AG04450 (cell line): ENCODE measurements at regions of chr21 and their contacts with region 1.

Region 1: GRCh38 chr21:41684381-41685245 is 82.2 kb downstream of the RIPK4 start:
- DNase-seq: peak; percentile 13
- H3K4me3 ChIP-seq: no peak overlapping the region
- H3K27ac ChIP-seq: no peak overlapping the region
- H3K27me3 ChIP-seq: peaks cover 16% of the 10 kb centered on the region
- CTCF ChIP-seq: no peak

Region 2: DNA sequence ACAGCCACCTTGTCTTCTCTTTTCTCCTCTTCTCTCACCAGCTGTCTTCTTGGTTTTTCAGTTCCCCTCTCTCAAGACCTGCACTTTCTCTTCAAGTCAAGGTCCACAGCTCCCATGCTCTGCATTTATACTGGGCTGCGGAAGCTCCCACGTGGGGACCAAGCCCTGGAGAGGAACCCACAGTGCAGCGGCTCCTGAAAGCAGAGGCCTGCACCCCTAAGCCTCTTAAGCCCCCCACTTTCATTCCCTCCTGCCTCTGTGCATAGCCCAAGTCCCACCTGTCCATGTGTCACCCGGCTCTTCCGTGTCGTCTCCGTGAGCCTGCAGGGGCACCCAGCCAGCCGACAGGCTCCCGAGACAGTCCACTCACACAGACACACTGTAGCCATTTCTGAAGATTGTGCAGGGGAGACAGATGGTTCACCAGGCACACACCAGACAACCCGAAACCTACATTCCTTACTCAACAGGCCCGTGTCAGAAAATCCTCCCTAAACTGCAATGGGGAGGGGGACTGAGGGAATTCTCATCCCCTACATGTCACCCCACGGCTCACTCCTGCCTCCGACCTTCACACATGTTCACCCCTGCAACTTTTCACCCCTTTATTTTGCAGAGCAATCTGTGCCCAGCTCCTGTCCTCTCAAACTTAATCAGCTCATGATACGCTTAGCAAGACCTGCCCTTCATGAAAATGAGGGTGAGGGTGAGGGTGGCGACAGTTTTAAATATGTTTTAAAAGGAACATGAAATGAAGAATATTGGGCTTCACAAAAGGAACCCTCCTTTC is 316.5 kb before region 1 on chr21:
- CTCF ChIA-PET with region 1: no interaction called
- POLR2A ChIA-PET with region 1: interaction called, 16 read pairs
- DNase-seq: no peak
- H3K4me3 ChIP-seq: no peak overlapping the region
- H3K27ac ChIP-seq: no peak overlapping the region
- H3K27me3 ChIP-seq: peaks cover 3% of the 10 kb centered on the region
- CTCF ChIP-seq: no peak

Region 3: DNA sequence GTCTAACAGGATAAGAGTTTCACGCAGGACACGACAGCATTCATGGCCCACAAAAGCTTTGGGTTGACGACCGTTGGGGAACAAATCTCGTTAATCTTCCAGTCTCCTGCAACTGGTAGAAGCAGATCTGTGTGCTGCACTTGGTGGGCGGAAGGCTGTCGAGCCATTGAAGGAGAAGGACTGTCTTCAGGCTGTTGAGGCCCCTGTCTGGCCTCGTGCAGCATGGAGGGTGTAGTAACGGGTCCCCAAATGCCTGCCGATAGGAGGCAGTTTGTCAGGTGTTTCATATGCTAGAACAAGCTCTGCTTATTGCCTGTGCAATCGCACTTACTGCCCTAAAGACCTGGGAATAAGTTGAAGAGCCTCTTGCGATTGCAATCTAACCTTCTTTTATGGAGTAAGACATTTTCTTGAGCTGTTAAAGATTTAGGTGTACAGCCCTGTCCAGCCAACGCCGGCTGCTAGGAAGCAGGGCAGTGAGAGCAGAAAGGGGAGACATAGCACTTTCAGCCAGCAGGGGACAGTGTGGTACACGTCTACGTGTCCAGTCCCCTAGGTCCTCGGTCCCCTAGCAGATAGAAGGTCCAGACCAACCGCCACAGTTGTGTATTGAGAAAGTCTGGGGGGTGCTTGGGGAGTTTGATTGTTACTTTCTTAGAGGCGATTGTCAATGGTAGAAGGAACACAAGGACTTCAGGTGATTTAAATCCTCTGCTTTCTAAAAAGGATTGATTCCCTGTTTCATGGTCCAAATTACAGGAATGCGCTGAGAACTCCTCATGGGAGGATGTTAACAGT is 74.4 kb before region 1 on chr21:
- CTCF ChIA-PET with region 1: no interaction called
- POLR2A ChIA-PET with region 1: no interaction called
- DNase-seq: no peak
- H3K4me3 ChIP-seq: no peak overlapping the region
- H3K27ac ChIP-seq: no peak overlapping the region
- H3K27me3 ChIP-seq: peaks cover 19% of the 10 kb centered on the region
- CTCF ChIP-seq: peak; percentile 91

Region 4: DNA sequence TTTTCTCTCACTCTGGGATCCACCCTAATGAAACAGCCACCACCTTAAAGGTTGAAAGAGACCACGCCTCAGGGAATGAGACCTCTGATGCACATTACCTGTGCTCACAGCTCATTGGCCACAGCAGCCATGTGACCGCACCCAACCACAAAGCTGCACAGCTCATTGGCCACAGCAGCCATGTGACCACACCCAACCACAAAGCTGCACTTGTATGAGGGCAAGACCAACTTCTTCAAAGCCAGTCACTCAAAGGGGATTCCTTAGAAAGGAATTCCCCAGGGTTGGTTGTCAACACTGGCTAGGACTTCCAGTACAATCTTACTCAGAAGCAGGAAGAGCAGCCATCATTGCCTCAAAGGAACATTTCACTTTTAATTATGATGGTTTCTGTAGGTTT is 925.2 kb after region 1 on chr21:
- CTCF ChIA-PET with region 1: no interaction called
- POLR2A ChIA-PET with region 1: no interaction called
- DNase-seq: no peak
- H3K4me3 ChIP-seq: no peak overlapping the region
- H3K27ac ChIP-seq: no peak overlapping the region
- H3K27me3 ChIP-seq: no peaks in the 10 kb centered on the region
- CTCF ChIP-seq: no peak